Heart right ventricle (tissue), 16 donors: ENCODE measurements at regions of chr1 and their contacts with region 1.

Region 1: DNA sequence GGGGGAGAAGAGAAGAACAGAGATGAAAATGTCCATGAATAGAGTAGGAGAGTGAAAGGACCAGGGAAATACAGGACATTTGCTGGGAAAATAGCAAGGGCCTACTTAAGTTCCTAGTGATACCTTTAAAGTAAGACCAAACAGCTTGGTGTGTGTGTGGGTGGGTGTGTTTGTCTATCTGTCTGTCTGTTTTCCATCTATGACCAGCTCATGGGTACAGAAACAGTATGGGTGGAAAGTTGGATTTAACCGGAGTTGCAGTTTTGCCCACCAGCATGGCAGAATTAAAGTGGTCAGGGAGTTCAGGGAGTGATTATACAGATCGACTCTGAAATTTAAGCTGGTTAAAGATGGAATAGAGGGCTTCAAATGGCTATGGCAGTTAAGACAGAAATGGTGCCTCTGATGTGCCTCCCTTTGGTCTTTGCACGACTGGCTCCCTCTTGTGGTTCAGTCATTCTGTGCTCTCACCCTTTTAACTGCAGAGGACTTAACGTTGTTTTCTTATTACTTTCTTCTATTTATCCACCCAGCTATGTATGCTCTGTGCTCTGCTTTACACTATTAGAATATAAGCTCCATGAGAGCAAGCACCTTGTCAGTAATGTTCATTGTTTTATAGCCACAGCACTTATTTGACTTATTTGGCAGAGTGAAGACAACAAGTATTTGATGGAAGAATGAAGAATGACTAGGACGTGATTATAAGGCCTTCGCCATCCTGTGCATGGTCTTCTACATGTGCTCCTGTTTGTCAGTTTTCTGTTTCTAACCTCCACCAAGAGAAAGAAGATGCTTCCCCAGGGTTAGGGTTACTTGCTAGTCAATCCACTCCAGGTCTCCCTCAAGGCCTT is 72.7 kb upstream of the AK4 start:
- DNase-seq: peak in 1 of 2 donors; percentile 68
- ATAC-seq: peak; percentile 50 to 84 (median 80)
- H3K4me3 ChIP-seq: no peak overlapping the region
- H3K27ac ChIP-seq: no peak overlapping the region
- H3K4me1 ChIP-seq: no peaks in the 10 kb centered on the region
- H3K27me3 ChIP-seq: no peaks in the 10 kb centered on the region
- CTCF ChIP-seq: peak; percentile 56 to 86 (median 78)

Region 2: GRCh38 chr1:64686828-64687724 is 388.3 kb before region 1 on chr1:
- intact Hi-C with region 1: loop called in 1 of 10 experiments (anchors 5 kb)
- DNase-seq: peak in 1 of 2 donors; percentile 19
- ATAC-seq: peak in 7 of 8 donors; percentile 41 to 82 (median 74)
- H3K4me3 ChIP-seq: no peak overlapping the region
- H3K27ac ChIP-seq: peak overlapping the region in 1 of 10 donors; percentile 34
- H3K4me1 ChIP-seq: peaks cover 0 to 23% (median 5%) of the 10 kb centered on the region in 9 donors
- H3K27me3 ChIP-seq: no peaks in the 10 kb centered on the region
- CTCF ChIP-seq: peak; percentile 63 to 92 (median 85)

Region 3: GRCh38 chr1:64864018-64864940 is 211.1 kb before region 1 on chr1:
- intact Hi-C with region 1: loop called in 2 of 10 experiments (anchors 5 to 10 kb)
- DNase-seq: peak; percentile 67 to 71
- ATAC-seq: peak; percentile 85 to 95 (median 88)
- H3K4me3 ChIP-seq: peak overlapping the region in 1 of 10 donors; percentile 4
- H3K27ac ChIP-seq: peak overlapping the region in 8 of 10 donors; percentile 8 to 82 (median 62)
- H3K4me1 ChIP-seq: peaks cover 0 to 32% (median 19%) of the 10 kb centered on the region in 9 donors
- H3K27me3 ChIP-seq: no peaks in the 10 kb centered on the region
- CTCF ChIP-seq: no peak

Region 4: DNA sequence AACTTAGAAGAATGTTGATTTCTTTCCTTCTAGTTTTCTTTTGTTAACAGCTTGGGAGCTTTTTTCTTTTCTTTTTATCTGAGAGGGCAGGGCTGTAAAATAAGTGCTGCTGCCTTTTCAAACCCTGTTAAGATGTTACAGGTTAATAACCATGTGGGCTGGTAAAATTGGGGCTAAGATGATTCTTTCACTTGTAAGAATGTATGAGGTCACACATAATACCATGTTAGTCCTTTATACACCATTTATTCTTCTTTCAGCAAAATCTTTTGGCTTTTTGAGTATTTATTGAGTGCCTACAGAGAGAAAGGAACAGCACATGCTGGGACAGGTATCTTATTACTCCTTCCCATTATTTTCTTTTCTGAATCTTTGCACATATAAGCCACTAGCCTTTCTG is 66.6 kb after region 1 on chr1:
- intact Hi-C with region 1: loop called in 3 of 10 experiments (anchors 2 to 10 kb)
- DNase-seq: no peak
- ATAC-seq: no peak
- H3K4me3 ChIP-seq: no peak overlapping the region
- H3K27ac ChIP-seq: no peak overlapping the region
- H3K4me1 ChIP-seq: peaks cover 0 to 17% (median 3%) of the 10 kb centered on the region in 9 donors
- H3K27me3 ChIP-seq: peaks cover 0 to 13% (median 0%) of the 10 kb centered on the region in 7 donors
- CTCF ChIP-seq: no peak

Region 5: DNA sequence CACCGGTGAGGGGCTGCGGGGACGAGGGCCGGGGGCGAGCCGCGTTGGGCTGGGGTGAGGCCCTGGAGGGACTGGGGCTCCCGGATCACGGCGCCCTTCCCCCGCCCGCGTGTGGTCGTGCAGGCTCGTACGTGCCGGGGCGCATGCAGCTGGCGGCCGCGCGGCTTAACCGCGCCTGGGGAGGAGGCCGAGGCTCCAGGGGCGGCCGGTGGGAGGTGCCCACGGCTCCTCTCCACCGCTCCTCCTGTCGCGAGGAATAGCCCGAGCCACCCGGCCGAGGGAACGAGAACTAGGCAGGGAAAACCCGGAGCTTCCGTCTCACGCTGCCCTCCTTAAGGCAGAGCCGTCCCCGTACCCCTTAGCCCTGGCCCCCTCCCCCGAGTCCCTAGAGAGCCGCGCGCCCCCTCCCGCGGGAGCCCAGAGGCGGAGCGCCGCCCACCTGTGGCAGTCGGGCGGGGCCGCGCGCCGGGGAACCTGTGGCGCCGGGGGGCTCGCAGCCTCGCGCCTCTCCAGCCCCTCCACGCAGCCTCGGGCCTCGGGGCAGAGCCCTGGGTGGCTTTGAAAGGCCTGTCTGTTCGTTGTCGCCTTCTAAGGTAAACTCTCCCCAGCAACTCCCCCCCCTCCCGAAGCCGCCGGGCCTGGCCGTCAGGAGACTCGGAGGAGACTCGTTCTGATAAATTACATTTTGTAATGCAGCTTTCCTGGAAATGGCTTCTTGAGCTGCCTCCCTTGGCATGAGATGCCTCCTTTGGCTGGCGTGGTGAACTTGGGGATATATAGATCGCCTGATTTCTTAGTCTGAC is 73.4 kb after region 1 on chr1:
- intact Hi-C with region 1: loop called in 1 of 10 experiments (anchors 2 kb)
- DNase-seq: peak; percentile 32 to 60
- ATAC-seq: peak; percentile 59 to 88 (median 73)
- H3K4me3 ChIP-seq: peak overlapping the region; percentile 77 to 94 (median 86)
- H3K27ac ChIP-seq: peak overlapping the region; percentile 55 to 95 (median 88)
- H3K4me1 ChIP-seq: peaks cover 0 to 38% (median 18%) of the 10 kb centered on the region in 9 donors
- H3K27me3 ChIP-seq: peaks cover 0 to 25% (median 0%) of the 10 kb centered on the region in 7 donors
- CTCF ChIP-seq: no peak

Region 6: DNA sequence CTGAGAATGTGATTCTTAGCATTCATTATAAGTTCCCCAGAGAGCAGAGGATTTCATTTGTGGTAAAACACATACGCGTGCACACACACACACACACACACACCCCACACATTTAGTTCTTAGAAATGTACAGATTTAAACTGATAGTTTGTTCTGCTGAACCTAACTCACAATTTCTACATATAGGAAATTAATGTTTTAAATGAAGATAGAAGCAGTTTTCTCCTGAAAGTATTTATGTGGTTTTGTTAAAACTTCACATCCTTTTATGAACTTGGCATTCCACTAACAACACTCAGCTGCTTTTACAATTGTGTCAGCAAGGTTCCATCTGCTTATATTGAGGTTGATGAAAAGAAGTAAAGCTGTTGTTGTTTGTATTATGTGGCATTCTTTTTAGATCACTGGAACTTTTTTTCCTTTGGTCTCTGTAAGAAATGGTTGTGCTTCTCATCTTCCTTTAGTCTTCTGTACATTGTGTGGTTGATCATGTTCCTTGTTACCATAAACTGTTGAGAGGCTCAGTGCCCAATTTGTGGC is 114.3 kb after region 1 on chr1:
- intact Hi-C with region 1: no loop called
- DNase-seq: no peak
- ATAC-seq: no peak
- H3K4me3 ChIP-seq: no peak overlapping the region
- H3K27ac ChIP-seq: no peak overlapping the region
- H3K4me1 ChIP-seq: peaks cover 0 to 19% (median 5%) of the 10 kb centered on the region in 9 donors
- H3K27me3 ChIP-seq: no peaks in the 10 kb centered on the region
- CTCF ChIP-seq: no peak

Region 7: DNA sequence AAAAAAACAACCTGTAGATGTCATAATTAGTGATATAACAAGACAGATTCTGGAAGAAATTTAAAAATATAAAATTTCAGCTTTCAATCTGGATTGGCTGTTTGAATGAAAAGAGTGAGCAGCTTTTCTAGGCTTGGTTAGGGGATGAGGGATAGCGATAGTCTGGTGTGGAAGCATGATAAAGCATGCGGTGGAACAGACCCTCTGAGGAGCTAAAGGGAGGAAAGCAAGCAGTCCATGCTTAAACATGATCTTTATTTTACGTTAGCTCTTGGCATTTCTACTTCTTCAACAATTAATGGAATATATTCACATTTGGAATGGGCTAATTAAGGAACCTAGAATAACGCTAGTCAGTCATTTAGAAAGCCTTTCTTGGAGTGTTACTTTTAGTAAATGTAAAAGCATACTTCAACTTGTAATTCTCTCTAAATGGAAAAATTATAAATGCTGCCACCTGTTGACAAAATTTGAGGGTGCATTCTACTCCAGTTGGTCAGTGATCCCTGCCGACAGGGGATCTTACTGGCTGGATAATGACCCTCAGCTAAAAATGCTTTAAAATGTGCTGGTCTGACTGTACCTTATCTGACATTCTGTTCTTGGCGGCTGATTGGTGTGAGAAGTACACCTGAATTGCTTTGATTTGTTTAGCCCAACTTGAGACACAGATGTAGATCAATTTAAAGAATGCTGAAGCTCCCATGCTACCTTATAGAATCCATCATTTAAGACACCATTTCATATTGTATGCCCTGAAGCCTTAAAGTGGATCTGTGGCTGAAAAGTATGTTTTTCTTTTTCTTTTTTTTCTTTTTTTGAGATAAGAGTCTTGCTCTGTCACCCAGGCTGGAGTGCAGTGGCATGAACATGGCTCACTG is 133.9 kb after region 1 on chr1:
- intact Hi-C with region 1: loop called in 1 of 10 experiments (anchors 5 kb)
- DNase-seq: peak in 1 of 2 donors; percentile 63
- ATAC-seq: peak; percentile 31 to 71 (median 60)
- H3K4me3 ChIP-seq: peak overlapping the region in 1 of 10 donors; percentile 11
- H3K27ac ChIP-seq: peak overlapping the region in 3 of 10 donors; percentile 17 to 51 (median 23)
- H3K4me1 ChIP-seq: peaks cover 0 to 31% (median 15%) of the 10 kb centered on the region in 9 donors
- H3K27me3 ChIP-seq: no peaks in the 10 kb centered on the region
- CTCF ChIP-seq: peak; percentile 36 to 82 (median 71)